ENCODE measurements at regions of chr5 and their contacts with region 1.

Region 1: DNA sequence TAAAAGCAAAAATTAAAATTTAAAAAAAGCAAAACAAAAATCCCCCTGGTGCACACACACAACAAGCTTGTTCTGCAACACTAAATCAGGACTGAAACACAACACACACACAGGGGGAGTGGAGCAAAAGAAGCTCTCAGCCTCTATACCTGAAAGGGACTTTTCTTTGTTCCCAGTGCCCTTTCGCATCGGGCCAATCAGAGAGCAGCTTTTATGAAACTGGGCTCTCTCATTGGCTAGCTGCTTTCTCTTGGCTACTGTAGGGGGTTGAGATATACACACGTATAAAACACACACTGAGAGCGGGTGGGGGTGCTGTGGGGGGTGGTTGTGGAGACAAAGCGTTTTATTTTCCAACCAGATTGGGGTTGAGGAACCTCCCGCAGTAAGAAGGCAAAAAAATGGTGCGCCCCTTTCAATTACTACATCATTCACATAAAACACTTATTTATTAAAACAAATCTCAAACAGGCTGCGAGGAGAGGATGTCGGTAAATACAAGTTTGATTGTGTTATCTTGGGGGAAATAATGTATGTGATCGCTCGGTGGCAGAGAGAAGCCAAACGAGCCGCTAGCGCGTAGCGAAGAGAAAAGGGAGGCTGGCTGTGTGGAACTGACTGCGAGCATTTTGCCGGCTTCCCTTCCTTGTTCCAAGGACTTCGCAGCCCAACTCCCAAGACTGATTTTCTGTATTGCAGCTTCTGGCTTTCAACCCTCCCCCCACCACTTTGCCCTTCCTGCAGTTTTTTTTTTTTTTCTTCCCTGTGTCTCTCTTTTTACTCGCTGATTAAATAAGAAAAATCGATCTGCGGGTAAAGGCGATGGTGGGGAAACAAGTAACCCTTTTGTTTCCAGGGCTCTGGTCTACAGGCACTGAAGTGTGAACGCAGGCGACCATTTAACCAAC is 2.5 kb upstream of the ZNF608 start:
- DNase-seq: peak; percentile 86 to 92
- ATAC-seq: peak; percentile 76 to 81
- H3K4me3 ChIP-seq: peak overlapping the region; percentile 63 to 81 (median 71)
- H3K27ac ChIP-seq: peak overlapping the region; percentile 87 to 96 (median 92)
- H3K4me1 ChIP-seq: peaks cover 17 to 18% of the 10 kb centered on the region in 2 donors
- H3K27me3 ChIP-seq: no peaks in the 10 kb centered on the region
- CTCF ChIP-seq: no peak
- POLR2A ChIP-seq: peak; percentile 69 to 91

Region 2: GRCh38 chr5:124519396-124519795 is 229.5 kb before region 1 on chr5:
- in situ Hi-C with region 1: no loop called
- intact Hi-C with region 1: loop called (anchors 2 kb)
- DNase-seq: peak; percentile 50 to 66
- ATAC-seq: peak; percentile 99 to 100
- H3K4me3 ChIP-seq: no peak overlapping the region
- H3K27ac ChIP-seq: peak overlapping the region; percentile 2 to 62 (median 40)
- H3K4me1 ChIP-seq: peaks cover 9 to 12% of the 10 kb centered on the region in 2 donors
- H3K27me3 ChIP-seq: no peaks in the 10 kb centered on the region
- CTCF ChIP-seq: no peak
- POLR2A ChIP-seq: no peak

Region 3: DNA sequence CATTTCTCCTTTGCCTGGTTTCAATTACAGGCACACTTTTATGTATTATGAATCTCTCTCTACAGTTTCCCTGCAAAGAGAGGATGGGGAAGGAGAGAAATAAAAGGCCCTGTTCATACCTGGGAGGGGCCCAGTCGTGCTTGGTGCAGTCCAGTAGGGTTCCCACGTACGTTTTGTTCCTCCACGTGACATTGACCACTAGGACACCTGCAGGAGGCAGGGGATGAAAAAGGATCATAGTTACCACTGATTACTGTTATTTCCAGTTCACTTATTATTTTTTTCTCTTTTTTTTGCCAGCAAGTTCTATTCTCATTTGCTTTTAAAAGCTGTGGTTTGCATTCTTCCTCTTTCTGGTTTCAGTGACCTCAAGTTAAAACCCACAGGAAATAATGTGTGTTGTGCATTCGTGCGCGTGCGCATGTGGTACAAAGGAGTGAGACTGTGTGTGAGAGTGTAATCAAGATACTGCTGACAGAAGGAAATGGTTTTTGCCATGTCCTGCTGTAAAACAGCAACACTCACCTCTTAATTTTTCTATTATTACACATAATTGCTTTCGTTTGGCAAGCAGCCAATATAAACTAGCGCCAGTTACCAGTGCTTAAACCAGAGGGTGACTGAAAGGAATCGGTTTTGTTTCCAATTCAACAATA is 99.3 kb before region 1 on chr5:
- in situ Hi-C with region 1: loop called in 1 of 4 experiments (anchors 10 kb)
- intact Hi-C with region 1: no loop called
- DNase-seq: peak in 1 of 2 donors; percentile 44
- ATAC-seq: no peak
- H3K4me3 ChIP-seq: peak overlapping the region; percentile 1 to 29 (median 19)
- H3K27ac ChIP-seq: peak overlapping the region; percentile 76 to 86 (median 83)
- H3K4me1 ChIP-seq: peaks cover 39 to 45% of the 10 kb centered on the region in 2 donors
- H3K27me3 ChIP-seq: no peaks in the 10 kb centered on the region
- CTCF ChIP-seq: no peak
- POLR2A ChIP-seq: no peak

Region 4: GRCh38 chr5:124824637-124825158 is 75.8 kb after region 1 on chr5:
- in situ Hi-C with region 1: no loop called
- intact Hi-C with region 1: loop called (anchors 5 kb)
- DNase-seq: peak in 1 of 2 donors; percentile 37
- ATAC-seq: peak; percentile 94 to 96
- H3K4me3 ChIP-seq: no peak overlapping the region
- H3K27ac ChIP-seq: peak overlapping the region in 3 of 4 donors; percentile 34 to 72 (median 51)
- H3K4me1 ChIP-seq: peaks cover 3 to 4% of the 10 kb centered on the region in 2 donors
- H3K27me3 ChIP-seq: no peaks in the 10 kb centered on the region
- CTCF ChIP-seq: peak in 1 of 5 experiments; percentile 8
- POLR2A ChIP-seq: no peak

Region 5: DNA sequence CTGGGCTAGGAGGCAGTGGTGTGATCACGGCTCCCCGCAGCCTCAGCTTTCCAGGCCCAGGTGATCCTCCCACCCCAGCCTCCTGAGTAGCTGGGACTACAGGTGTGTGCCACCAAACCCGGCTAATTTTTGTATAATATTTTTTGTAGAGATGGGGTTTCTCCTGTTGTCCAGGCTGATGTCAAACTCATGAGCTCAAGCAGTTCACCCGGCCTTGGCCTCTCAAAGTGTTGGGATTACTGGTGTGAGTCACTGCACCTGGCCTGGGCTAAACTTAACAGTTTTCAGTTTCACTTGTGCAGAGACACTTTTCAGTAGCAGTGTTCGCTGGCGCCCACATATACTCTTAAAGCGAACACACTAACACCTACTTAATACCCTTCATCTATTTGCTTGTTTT is 203.1 kb after region 1 on chr5:
- in situ Hi-C with region 1: no loop called
- intact Hi-C with region 1: loop called (anchors 5 kb)
- DNase-seq: peak in 1 of 2 donors; percentile 16
- ATAC-seq: peak in 1 of 2 donors; percentile 51
- H3K4me3 ChIP-seq: no peak overlapping the region
- H3K27ac ChIP-seq: peak overlapping the region in 1 of 4 donors; percentile 19
- H3K4me1 ChIP-seq: peaks cover 8 to 14% of the 10 kb centered on the region in 2 donors
- H3K27me3 ChIP-seq: no peaks in the 10 kb centered on the region
- CTCF ChIP-seq: no peak
- POLR2A ChIP-seq: no peak

Region 6: GRCh38 chr5:125412561-125413495 is 663.9 kb after region 1 on chr5:
- in situ Hi-C with region 1: no loop called
- intact Hi-C with region 1: loop called (anchors 10 kb)
- DNase-seq: peak; percentile 75 to 78
- ATAC-seq: peak; percentile 87 to 89
- H3K4me3 ChIP-seq: peak overlapping the region in 3 of 4 donors; percentile 6 to 33 (median 7)
- H3K27ac ChIP-seq: peak overlapping the region; percentile 44 to 67 (median 66)
- H3K4me1 ChIP-seq: peaks cover 31 to 33% of the 10 kb centered on the region in 2 donors
- H3K27me3 ChIP-seq: no peaks in the 10 kb centered on the region
- CTCF ChIP-seq: peak in 3 of 5 experiments; percentile 29 to 53 (median 50)
- POLR2A ChIP-seq: no peak